ENCODE measurements at regions of chr12 and their contacts with region 1.

Region 1: GRCh38 chr12:4320853-4321701 is at the start of gene TIGAR:
- DNase-seq: peak; percentile 93
- ATAC-seq: peak; percentile 100
- H3K4me3 ChIP-seq: peak within 1 kb of the TSS; percentile 94
- H3K27ac ChIP-seq: peak within 1 kb of the TSS; percentile 89
- H3K4me1 ChIP-seq: peaks cover 2% of the 10 kb centered on the region; the same call in 1 of the 2 replicates
- H3K27me3 ChIP-seq: no peaks in the 10 kb centered on the region
- CTCF ChIP-seq: no peak
- POLR2A ChIP-seq: peak; percentile 95
- RAD21 ChIP-seq: no peak
- total RNA-seq, gene TIGAR: 7.3 and 13.9 TPM in 2 replicates

Region 2: DNA sequence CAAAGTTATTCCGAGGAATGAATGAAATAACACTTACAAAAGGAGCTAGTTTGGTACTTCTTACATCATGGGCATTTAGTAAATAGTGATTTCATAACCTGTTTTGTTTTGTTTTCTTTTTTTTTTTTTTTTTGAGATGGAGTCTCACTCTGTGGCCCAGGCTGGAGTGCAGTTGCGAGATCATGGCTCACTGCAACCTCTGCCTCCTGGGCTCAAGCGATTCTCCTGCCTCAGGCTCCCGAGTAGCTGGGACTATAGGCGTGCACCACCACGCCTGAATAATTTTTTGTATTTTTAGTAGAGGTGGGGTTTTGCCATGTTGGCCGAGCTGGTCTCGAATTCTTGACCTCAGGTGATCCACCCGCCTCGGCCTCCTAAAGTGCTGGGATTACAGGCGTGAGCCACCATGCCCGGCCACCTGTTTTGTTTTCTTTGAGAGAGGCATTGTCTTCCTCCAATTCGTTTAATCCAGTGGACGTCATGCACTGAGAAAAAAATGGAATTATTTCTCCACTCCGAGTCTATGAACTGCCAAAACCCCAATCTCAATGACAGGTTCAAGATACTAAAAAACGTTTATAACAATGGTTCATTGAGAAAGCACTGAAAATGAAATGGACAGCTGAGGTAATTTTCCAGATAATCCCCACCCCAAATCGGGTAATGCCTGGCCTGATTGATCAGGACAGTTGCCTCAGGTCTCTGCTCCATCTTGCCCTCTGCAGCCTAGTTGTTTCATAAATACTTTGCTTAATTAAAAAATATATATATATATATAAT is 315.2 kb before region 1 on chr12:
- CTCF ChIA-PET with region 1: no interaction called
- POLR2A ChIA-PET with region 1: interaction called, 11 read pairs
- dilution Hi-C with region 1: no loop called
- in situ Hi-C with region 1: no loop called
- intact Hi-C with region 1: no loop called
- DNase-seq: no peak
- ATAC-seq: no peak
- H3K4me3 ChIP-seq: no peak overlapping the region
- H3K27ac ChIP-seq: no peak overlapping the region
- H3K4me1 ChIP-seq: no peaks in the 10 kb centered on the region
- H3K27me3 ChIP-seq: peaks cover 3% of the 10 kb centered on the region; the same call in 1 of the 2 replicates
- CTCF ChIP-seq: no peak
- POLR2A ChIP-seq: no peak
- RAD21 ChIP-seq: no peak

Region 3: GRCh38 chr12:4538207-4539160 is 217.4 kb after region 1 on chr12 and contains the start of gene RAD51AP1:
- CTCF ChIA-PET with region 1: no interaction called
- POLR2A ChIA-PET with region 1: no interaction called
- dilution Hi-C with region 1: no loop called
- in situ Hi-C with region 1: no loop called
- intact Hi-C with region 1: loop called (anchors 5 kb)
- DNase-seq: peak; percentile 97
- ATAC-seq: peak; percentile 100
- H3K4me3 ChIP-seq: peak within 1 kb of the TSS; percentile 97
- H3K27ac ChIP-seq: peak within 1 kb of the TSS; percentile 86
- H3K4me1 ChIP-seq: no peaks in the 10 kb centered on the region
- H3K27me3 ChIP-seq: no peaks in the 10 kb centered on the region
- CTCF ChIP-seq: no peak
- POLR2A ChIP-seq: no peak
- RAD21 ChIP-seq: no peak
- total RNA-seq, gene RAD51AP1: 6.5 and 15.3 TPM in 2 replicates

Measured in IMR-90 (cell line).